Sigmoid colon (tissue), 7 donors: ENCODE measurements at regions of chr19 and their contacts with region 1.

Region 1: GRCh38 chr19:10644260-10645007 is 9.7 kb upstream of the ILF3 start:
- DNase-seq: peak; percentile 92
- H3K4me3 ChIP-seq: no peak overlapping the region
- H3K27ac ChIP-seq: peak overlapping the region; percentile 13 to 60 (median 33)
- H3K4me1 ChIP-seq: peaks cover 0 to 12% (median 8%) of the 10 kb centered on the region in 4 donors
- H3K27me3 ChIP-seq: no peaks in the 10 kb centered on the region
- CTCF ChIP-seq: peak; percentile 76 to 93 (median 82)
- EP300 ChIP-seq: no peak
- POLR2A ChIP-seq: no peak

Region 2: DNA sequence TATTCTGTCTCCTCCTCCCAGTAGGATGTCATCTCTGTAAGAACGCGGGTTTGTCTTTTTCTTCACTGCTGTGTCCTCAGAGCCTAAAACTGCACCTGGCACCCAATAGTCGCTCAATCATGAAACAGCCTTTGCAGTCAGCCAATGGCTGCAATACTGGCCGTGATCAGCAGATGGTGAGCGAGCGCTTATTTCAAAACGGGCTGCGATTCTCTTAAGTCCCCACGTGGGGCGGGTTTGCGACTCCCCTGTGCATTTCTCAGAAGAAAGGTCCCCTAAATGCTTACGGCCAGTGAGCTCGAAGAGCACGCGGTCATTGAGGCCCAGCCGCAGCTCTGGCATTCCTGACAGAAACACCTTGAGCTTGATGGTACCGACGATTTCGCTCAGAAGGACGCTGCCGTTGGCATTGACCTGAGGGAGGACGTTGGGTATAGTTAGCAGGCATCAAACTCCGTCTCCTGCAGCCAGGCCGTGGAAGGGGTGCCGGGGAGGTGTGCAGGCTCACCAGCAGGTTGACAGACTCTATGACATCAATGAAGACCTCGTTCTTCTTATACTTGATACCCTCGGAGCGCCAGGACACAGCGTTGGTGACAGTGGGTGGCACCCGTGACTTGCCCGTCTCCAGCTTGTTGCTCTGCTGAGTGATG is 63.3 kb before region 1 on chr19:
- intact Hi-C with region 1: loop called (anchors 1 kb)
- DNase-seq: peak; percentile 93
- H3K4me3 ChIP-seq: no peak overlapping the region
- H3K27ac ChIP-seq: no peak overlapping the region
- H3K4me1 ChIP-seq: peaks cover 0 to 7% (median 3%) of the 10 kb centered on the region in 4 donors
- H3K27me3 ChIP-seq: peaks cover 0 to 6% (median 0%) of the 10 kb centered on the region in 3 donors
- CTCF ChIP-seq: peak; percentile 95 to 99 (median 99)
- EP300 ChIP-seq: no peak
- POLR2A ChIP-seq: no peak